A549 (cell line): ENCODE measurements at regions of chr1 and their contacts with region 1.

Region 1: DNA sequence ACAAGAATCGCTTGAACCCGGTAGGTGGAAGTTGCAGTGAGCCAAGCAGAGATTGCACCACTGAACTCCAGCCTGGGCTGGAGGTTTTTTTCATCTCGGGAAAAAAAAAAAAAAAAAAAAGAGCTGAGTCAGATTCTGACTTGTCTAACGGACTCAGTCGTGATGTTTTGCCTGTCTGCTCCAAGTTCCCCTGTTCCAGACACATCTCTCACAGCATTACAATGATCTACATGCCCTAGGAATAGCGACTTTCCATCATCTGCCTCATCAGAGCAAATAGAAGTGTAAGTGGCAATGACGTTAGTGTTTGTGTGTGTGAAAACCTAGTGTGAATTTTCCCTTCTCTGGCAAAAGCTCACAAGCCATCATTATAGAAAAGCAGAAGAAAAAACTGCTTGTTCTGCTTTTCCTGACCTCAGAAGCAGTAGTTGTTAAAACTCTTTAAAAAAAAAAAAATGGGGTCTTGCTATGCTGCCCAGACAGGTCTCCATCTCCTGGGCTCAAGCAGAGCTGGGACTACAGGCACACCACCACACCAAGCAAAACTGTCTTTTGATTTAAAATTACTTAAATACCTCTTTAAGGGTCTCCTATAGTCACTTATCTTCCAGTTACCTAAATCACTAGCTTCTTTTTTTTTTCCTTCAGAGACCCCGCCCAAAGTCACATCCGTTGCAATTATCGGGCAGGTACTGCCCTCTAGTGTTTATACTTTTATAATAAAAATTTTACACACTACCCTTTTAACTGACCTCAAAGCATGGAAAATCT is 37.3 kb downstream of the PLEKHO1 start:
- DNase-seq: peak; percentile 53 to 62
- ATAC-seq: peak; percentile 85 to 87
- H3K4me3 ChIP-seq: peak overlapping the region; percentile 10; the same call in 1 of the 3 replicates
- H3K27ac ChIP-seq: peak overlapping the region; percentile 28 to 73; a peak in 4 of 6 replicates
- H3K4me1 ChIP-seq: peaks cover 18% of the 10 kb centered on the region
- CTCF ChIP-seq: peak; percentile 91
- EP300 ChIP-seq: no peak
- POLR2A ChIP-seq: no peak
- RAD21 ChIP-seq: peak; percentile 83 to 89

Region 2: GRCh38 chr1:149962123-149962548 is 224.8 kb before region 1 on chr1:
- CTCF ChIA-PET with region 1: interaction called, 12 read pairs
- POLR2A ChIA-PET with region 1: no interaction called
- DNase-seq: peak; percentile 51 to 79
- ATAC-seq: peak; percentile 94
- H3K4me3 ChIP-seq: no peak overlapping the region
- H3K27ac ChIP-seq: no peak overlapping the region
- H3K4me1 ChIP-seq: no peaks in the 10 kb centered on the region
- CTCF ChIP-seq: peak; percentile 92
- EP300 ChIP-seq: no peak
- POLR2A ChIP-seq: no peak
- RAD21 ChIP-seq: peak; percentile 80 to 82

Region 3: GRCh38 chr1:150053926-150054325 is 133.0 kb before region 1 on chr1:
- CTCF ChIA-PET with region 1: interaction called, 11 read pairs
- POLR2A ChIA-PET with region 1: no interaction called
- DNase-seq: no peak
- ATAC-seq: no peak
- H3K4me3 ChIP-seq: no peak overlapping the region
- H3K27ac ChIP-seq: no peak overlapping the region
- H3K4me1 ChIP-seq: 0 out of 3 replicates have a peak, but pooled peaks cover 3% of the 10 kb centered on the region
- CTCF ChIP-seq: no peak
- EP300 ChIP-seq: no peak
- POLR2A ChIP-seq: no peak
- RAD21 ChIP-seq: no peak

Region 4: GRCh38 chr1:150072959-150073358 is 114.0 kb before region 1 on chr1:
- CTCF ChIA-PET with region 1: interaction called, 75 read pairs
- POLR2A ChIA-PET with region 1: interaction called, 4 read pairs
- DNase-seq: peak; percentile 16 to 19
- ATAC-seq: peak; percentile 70 to 73; a peak in 5 of 6 replicates
- H3K4me3 ChIP-seq: no peak overlapping the region
- H3K27ac ChIP-seq: no peak overlapping the region
- H3K4me1 ChIP-seq: peaks cover 6% of the 10 kb centered on the region; the same call in 2 of the 3 replicates
- CTCF ChIP-seq: peak; percentile 58
- EP300 ChIP-seq: no peak
- POLR2A ChIP-seq: no peak
- RAD21 ChIP-seq: peak; percentile 53 to 68

Region 5: GRCh38 chr1:150168960-150169601 is 17.9 kb before region 1 on chr1:
- CTCF ChIA-PET with region 1: interaction called, 73 read pairs
- POLR2A ChIA-PET with region 1: no interaction called
- DNase-seq: peak; percentile 65 to 92
- ATAC-seq: peak; percentile 76 to 89
- H3K4me3 ChIP-seq: no peak overlapping the region
- H3K27ac ChIP-seq: no peak overlapping the region
- H3K4me1 ChIP-seq: no peaks in the 10 kb centered on the region
- CTCF ChIP-seq: peak; percentile 88
- EP300 ChIP-seq: no peak
- POLR2A ChIP-seq: no peak
- RAD21 ChIP-seq: peak; percentile 87 to 90

Region 6: GRCh38 chr1:150207281-150207971 is 20.5 kb after region 1 on chr1:
- CTCF ChIA-PET with region 1: interaction called, 15 read pairs
- POLR2A ChIA-PET with region 1: no interaction called
- DNase-seq: no peak
- ATAC-seq: no peak; a peak in 1 of 6 replicates
- H3K4me3 ChIP-seq: no peak overlapping the region
- H3K27ac ChIP-seq: no peak overlapping the region
- H3K4me1 ChIP-seq: peaks cover 8% of the 10 kb centered on the region; the same call in 2 of the 3 replicates
- CTCF ChIP-seq: no peak
- EP300 ChIP-seq: no peak
- POLR2A ChIP-seq: no peak
- RAD21 ChIP-seq: no peak